MCF 10A (cell line): ENCODE measurements at regions of chr5 and their contacts with region 1.

Region 1: GRCh38 chr5:132677191-132677590 is 3.4 kb downstream of the IL4 start:
- DNase-seq: peak; percentile 94
- H3K4me3 Mint-ChIP-seq: no peak overlapping the region
- H3K27ac Mint-ChIP-seq: peak overlapping the region; percentile 8
- H3K4me1 Mint-ChIP-seq: peaks cover 43% of the 10 kb centered on the region
- H3K27me3 Mint-ChIP-seq: no peaks in the 10 kb centered on the region
- CTCF ChIP-seq: peak; percentile 62

Region 2: DNA sequence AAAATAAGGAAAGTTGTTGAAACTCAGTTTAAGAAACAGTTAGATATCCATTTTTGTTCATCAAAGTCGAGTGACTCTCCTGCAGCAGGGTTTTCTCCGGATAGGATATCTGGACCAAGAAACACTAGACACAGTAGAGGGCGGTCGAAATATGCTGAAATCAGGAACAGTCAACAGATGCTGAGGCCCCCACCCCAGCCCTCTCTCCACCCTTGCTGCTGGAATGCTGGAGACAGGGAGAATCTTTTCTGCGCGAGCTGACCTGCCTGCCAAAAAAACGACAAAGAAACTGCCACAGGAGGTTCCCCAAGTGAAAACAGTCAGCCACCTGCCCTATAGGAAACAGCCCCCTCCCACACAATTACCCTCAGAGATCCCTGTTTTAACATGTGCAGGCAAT is 23.5 kb before region 1 on chr5:
- CTCF ChIA-PET with region 1: interaction called, 4 read pairs
- POLR2A ChIA-PET with region 1: interaction called, 3 read pairs
- intact Hi-C with region 1: loop called (anchors 1 kb)
- DNase-seq: no peak
- H3K4me3 Mint-ChIP-seq: no peak overlapping the region
- H3K27ac Mint-ChIP-seq: no peak overlapping the region
- H3K4me1 Mint-ChIP-seq: no peaks in the 10 kb centered on the region
- H3K27me3 Mint-ChIP-seq: no peaks in the 10 kb centered on the region
- CTCF ChIP-seq: no peak

Region 3: DNA sequence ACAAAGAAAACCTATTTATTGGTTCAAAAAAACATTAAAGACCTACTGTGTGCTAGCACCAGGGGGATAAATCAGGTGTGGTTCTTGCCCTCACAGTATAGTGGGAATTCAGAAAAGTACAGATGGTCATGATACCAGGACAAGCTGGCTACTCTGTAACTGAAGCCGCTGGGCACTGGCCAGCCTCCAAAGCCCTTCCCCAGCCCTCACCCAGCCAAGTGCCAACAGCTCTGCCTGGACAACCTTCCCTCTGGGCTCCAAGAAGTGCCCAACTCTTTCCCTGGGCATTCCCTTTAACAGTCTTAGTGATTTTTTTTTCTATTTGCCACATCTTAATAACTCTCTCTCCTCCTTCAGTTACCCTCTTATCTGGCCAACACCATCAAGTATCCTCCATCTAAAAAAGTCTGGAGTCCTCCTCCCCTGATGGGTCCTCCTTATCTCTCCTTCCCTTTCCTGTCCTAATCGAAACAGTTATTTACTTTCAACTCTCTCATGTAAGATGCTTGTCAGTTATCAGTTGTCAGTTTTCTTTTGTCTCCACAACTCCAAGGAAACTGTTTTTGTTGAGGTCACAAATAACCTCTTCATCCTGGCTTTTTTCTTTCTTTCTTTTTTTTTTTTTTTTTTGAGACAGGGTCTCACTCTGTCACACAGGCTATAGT is 113.1 kb after region 1 on chr5:
- CTCF ChIA-PET with region 1: no interaction called
- POLR2A ChIA-PET with region 1: no interaction called
- intact Hi-C with region 1: no loop called
- DNase-seq: no peak
- H3K4me3 Mint-ChIP-seq: no peak overlapping the region
- H3K27ac Mint-ChIP-seq: no peak overlapping the region
- H3K4me1 Mint-ChIP-seq: no peaks in the 10 kb centered on the region
- H3K27me3 Mint-ChIP-seq: no peaks in the 10 kb centered on the region
- CTCF ChIP-seq: no peak